Heart right ventricle (tissue), 16 donors: ENCODE measurements at regions of chr5 and their contacts with region 1.

Region 1: DNA sequence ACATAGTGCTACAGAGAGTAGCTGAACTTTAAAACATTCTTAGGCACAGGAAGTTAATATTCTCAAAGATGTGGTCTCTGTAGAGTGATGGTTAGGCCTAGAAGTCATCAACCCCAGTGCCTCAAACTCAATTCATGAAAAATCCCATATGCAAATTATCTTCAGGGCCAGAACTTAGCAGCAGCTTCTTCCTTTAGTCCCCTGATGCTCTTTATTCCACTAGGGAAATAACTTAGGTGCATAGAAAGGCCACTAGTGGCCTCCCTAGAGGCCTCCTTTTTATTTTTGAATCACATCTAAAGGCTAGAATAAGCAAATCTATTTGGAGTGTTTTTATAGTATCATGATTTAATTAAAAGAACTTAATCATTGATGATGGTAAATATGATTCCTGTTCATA is 88.3 kb downstream of the GIN1 start:
- DNase-seq: no peak
- ATAC-seq: no peak
- H3K4me3 ChIP-seq: no peak overlapping the region
- H3K27ac ChIP-seq: no peak overlapping the region
- H3K4me1 ChIP-seq: peaks cover 0 to 15% (median 0%) of the 10 kb centered on the region in 9 donors
- H3K27me3 ChIP-seq: no peaks in the 10 kb centered on the region
- CTCF ChIP-seq: peak in 6 of 9 donors; percentile 12 to 39 (median 22)

Region 2: GRCh38 chr5:102670224-102670836 is 361.3 kb before region 1 on chr5:
- intact Hi-C with region 1: loop called in 1 of 10 experiments (anchors 10 kb)
- DNase-seq: peak; percentile 6 to 12
- ATAC-seq: peak in 4 of 8 donors; percentile 53 to 75 (median 61)
- H3K4me3 ChIP-seq: no peak overlapping the region
- H3K27ac ChIP-seq: no peak overlapping the region
- H3K4me1 ChIP-seq: peaks cover 0 to 1% (median 0%) of the 10 kb centered on the region in 9 donors
- H3K27me3 ChIP-seq: no peaks in the 10 kb centered on the region
- CTCF ChIP-seq: peak; percentile 20 to 63 (median 57)

Region 3: DNA sequence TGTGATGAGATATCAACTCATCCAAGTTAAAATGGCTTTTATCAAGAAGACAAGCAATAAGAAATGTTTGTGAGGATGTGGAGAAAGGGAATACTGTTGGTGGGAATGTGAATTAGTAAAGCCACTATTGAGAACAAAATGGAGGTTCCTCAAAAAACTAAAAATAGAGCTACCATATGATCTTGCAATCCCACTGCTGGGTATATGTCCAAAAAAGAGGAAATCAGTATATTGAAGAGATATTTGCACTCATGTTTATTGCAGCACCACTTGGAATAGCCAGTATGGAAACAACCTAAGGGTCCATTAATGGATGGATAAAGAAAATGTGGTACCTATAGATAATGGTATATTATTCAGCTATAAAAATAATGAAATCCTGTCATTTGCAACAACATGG is 113.6 kb after region 1 on chr5:
- intact Hi-C with region 1: loop called in 1 of 10 experiments (anchors 10 kb)
- DNase-seq: no peak
- ATAC-seq: no peak
- H3K4me3 ChIP-seq: no peak overlapping the region
- H3K27ac ChIP-seq: no peak overlapping the region
- H3K4me1 ChIP-seq: no peaks in the 10 kb centered on the region
- H3K27me3 ChIP-seq: no peaks in the 10 kb centered on the region
- CTCF ChIP-seq: no peak

Region 4: GRCh38 chr5:103166706-103167105 is 135.1 kb after region 1 on chr5:
- intact Hi-C with region 1: no loop called
- DNase-seq: no peak
- ATAC-seq: no peak
- H3K4me3 ChIP-seq: no peak overlapping the region
- H3K27ac ChIP-seq: no peak overlapping the region
- H3K4me1 ChIP-seq: no peaks in the 10 kb centered on the region
- H3K27me3 ChIP-seq: no peaks in the 10 kb centered on the region
- CTCF ChIP-seq: no peak

Region 5: DNA sequence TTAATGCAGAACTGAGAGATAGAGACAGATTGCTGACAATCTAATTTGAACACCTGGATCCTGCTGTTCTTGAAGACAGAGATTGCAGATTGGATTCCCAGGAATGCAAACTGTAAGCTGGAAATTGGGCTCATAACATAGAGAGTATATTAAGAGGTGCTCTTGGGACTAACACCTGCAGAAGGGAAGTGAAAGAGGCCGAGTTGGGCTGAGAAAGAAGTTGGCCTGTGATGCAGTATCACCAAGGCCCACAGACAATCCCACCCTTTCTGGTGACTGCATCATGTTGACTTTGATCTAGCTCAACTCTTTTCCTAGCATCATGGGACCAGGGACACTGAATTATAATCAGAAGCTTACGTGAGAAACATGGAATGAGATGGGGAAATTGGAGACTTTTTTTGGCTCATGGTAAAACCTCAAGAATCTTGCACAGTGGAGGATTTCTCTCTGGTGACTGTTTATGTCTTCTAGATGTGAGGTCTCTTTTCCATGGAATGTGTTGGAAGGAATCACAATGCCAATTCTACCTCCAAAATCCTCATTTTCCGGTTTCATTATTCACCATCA is 567.5 kb after region 1 on chr5:
- intact Hi-C with region 1: no loop called
- DNase-seq: no peak
- ATAC-seq: no peak
- H3K4me3 ChIP-seq: no peak overlapping the region
- H3K27ac ChIP-seq: no peak overlapping the region
- H3K4me1 ChIP-seq: no peaks in the 10 kb centered on the region
- H3K27me3 ChIP-seq: no peaks in the 10 kb centered on the region
- CTCF ChIP-seq: no peak